ENCODE measurements at regions of chr3 and their contacts with region 1.

Region 1: DNA sequence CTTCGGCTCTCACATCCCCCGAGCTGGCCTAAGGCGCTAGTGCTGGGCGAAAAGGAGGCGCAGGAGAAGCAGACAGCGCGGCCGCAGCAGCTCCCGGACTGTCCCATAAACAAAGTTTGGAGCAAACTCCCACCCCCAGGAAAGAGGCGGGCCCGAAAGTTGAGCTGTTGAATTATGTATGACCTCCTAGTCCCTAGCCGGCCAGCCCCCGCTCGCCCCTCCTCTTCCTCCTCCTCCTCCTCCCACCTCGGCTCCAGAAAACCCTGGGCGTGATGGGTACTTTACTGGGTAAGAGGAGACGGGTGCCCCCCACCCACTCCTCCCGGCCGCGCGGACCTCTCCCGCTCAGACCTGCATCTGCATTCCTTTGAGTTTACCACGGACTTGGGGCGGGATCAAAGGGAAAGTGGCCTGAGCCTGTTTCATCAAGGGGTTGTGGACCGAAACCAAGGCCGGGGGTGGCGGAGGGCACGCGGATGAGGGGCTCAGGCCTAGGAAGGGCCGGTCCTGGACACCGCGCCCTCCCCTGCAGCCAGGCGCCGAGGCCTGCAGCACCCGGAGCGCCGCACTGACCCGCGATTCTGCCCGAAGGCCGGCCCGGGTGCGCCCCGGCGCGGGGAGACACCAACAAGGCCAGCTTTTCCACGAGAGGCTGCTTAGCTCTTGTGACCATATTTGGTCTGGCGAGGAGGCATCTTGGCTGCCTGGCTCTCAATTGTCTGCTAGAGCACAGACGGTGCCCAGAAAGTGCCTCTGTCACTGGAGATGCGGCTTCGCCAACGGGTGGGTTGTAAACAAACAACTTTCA is at the start of gene WWTR1:
- DNase-seq: peak; percentile 96
- H3K4me3 ChIP-seq: peak within 1 kb of the TSS; percentile 72 to 83
- H3K27ac ChIP-seq: peak within 1 kb of the TSS; percentile 95 to 99
- H3K4me1 ChIP-seq: peaks cover 14% of the 10 kb centered on the region
- H3K27me3 ChIP-seq: no peaks in the 10 kb centered on the region
- CTCF ChIP-seq: no peak
- POLR2A ChIP-seq: peak; percentile 89
- total RNA-seq, gene WWTR1: 46.5 to 47.0 TPM

Region 2: GRCh38 chr3:149534671-149535332 is 123.3 kb before region 1 on chr3:
- intact Hi-C with region 1: loop called (anchors 5 kb)
- DNase-seq: no peak
- H3K4me3 ChIP-seq: no peak overlapping the region
- H3K27ac ChIP-seq: peak overlapping the region in 1 of 2 donors; percentile 9
- H3K4me1 ChIP-seq: peaks cover 41% of the 10 kb centered on the region
- H3K27me3 ChIP-seq: no peaks in the 10 kb centered on the region
- CTCF ChIP-seq: no peak
- POLR2A ChIP-seq: no peak

Measured in testis (tissue), 5 donors.